Endothelial cell of umbilical vein (primary cell): ENCODE measurements at regions of chr2 and their contacts with region 1.

Region 1: DNA sequence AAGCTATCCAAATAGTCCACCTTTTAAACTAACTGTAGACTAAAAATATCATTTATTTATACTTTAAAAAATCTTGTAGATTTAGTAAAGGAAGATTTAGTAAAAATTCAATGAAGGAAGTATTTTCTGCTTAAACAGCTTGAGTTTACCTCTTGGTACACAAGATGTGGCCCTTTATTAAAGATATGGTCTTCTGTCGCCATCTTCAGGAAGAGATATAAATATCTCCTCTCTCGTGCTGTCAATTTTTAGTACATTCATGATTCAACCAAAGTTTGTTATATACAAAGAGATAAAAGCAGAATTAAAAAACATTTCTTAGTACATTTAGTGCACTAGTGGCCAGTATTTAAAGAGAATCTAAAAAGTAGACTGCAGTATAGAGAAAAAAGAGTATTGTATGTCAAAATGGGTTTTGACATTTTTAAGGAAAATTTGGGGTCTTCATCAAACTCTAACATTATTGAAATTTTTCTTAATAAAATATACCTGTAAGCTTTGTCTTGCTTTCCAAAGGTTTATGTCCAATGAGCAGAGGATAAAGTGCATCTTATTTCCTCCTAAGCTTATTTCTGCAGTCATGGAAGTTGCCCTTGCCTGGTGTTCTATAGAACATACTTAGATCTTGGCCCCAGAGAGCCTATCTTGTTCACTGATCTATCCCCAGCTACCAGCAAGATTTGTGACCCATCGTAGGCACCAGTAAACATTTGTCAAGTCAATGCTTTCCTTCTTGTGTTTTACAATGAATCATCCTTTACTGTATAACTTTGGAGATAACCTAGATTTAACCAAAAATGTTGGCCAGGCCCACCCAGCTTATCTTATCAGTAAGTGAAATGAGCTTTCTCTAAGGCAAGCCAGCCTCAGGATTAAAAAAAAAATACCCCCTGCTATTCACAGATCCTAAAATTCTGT is 18.5 kb upstream of the EML6 start:
- DNase-seq: peak; percentile 71
- H3K4me3 ChIP-seq: no peak overlapping the region
- H3K27ac ChIP-seq: no peak overlapping the region
- H3K4me1 ChIP-seq: peaks cover 8% of the 10 kb centered on the region
- H3K27me3 ChIP-seq: peaks cover 0 to 9% of the 10 kb centered on the region in 2 experiments
- CTCF ChIP-seq: peak; percentile 14 to 20
- POLR2A ChIP-seq: no peak

Region 2: GRCh38 chr2:54106631-54107454 is 598.1 kb before region 1 on chr2:
- CTCF ChIA-PET with region 1: interaction called, 205 read pairs
- POLR2A ChIA-PET with region 1: interaction called, 3 read pairs
- dilution Hi-C with region 1: no loop called
- intact Hi-C with region 1: loop called (anchors 1 kb)
- DNase-seq: peak; percentile 69
- H3K4me3 ChIP-seq: no peak overlapping the region
- H3K27ac ChIP-seq: no peak overlapping the region
- H3K4me1 ChIP-seq: peaks cover 11% of the 10 kb centered on the region
- H3K27me3 ChIP-seq: no peaks in the 10 kb centered on the region
- CTCF ChIP-seq: peak; percentile 53 to 56
- POLR2A ChIP-seq: no peak

Region 3: DNA sequence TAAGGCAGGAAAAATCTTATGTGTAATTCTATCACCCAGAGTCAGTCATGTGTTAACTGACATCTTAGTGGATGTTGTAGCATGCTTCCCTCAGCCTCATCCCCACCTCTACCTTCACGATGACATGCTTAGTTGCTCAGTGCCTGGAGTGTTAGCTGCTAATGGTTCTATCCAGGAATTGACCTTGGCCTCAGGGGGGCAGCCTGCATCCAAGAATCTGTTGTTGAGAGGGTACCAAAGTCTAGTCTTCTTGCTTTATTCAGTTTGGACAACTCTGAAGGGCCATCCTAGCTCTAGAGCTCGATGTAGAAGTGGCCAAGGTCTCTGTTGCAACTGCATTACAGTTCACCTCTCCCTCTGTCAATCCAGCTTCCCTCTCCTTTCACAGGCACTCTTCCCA is 528.4 kb before region 1 on chr2:
- CTCF ChIA-PET with region 1: interaction called, 11 read pairs
- POLR2A ChIA-PET with region 1: no interaction called
- dilution Hi-C with region 1: no loop called
- intact Hi-C with region 1: loop called (anchors 1 kb)
- DNase-seq: peak; percentile 43
- H3K4me3 ChIP-seq: no peak overlapping the region
- H3K27ac ChIP-seq: no peak overlapping the region
- H3K4me1 ChIP-seq: no peaks in the 10 kb centered on the region
- H3K27me3 ChIP-seq: no peaks in the 10 kb centered on the region
- CTCF ChIP-seq: peak; percentile 29 to 30
- POLR2A ChIP-seq: no peak

Region 4: DNA sequence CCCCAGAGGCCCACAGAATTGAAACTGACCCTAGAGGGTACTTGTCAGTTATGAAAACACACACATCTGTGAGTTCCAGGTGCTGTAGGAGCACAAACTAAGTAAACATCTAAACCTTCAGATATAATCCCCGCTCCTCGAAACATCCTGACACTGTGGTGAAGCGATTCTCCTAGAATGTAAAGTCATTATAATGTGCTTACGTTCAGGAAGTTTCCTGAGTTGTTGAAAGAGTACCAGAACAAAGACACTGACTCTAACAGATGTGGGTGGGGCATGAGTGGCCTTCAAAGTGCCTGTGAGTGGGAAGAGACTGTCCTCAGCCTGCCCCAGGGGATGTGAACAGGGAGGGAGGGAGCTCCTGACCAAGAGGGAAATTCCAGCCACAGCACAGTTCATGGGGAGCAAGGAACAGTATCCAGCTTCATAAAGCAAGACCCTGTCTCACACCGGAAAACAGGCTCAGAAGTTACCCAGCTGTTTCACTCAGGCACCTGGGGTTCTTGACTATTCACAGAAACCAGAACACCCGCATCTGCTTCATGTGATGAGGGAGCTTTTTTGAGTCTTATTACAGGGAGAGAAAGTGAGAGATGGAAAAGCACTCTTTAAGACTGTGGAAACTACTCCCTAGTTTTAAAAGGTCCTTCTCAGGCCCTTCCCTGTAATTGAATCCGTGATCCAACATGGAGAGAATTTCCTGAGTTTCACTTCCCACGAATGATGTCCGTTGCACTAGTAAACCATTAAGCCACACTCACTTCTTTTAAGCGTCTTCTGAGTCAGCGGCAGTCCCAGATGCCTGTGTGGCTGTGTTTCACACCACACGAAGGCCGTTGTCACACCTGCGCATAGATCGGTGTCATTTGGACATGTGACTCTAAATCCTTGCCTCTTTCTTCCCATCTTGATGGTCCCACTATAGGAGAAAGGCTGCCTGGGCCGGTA is 70.1 kb before region 1 on chr2:
- CTCF ChIA-PET with region 1: interaction called, 10 read pairs
- POLR2A ChIA-PET with region 1: no interaction called
- dilution Hi-C with region 1: no loop called
- intact Hi-C with region 1: no loop called
- DNase-seq: peak; percentile 92
- H3K4me3 ChIP-seq: no peak overlapping the region
- H3K27ac ChIP-seq: peak overlapping the region; percentile 91
- H3K4me1 ChIP-seq: peaks cover 37% of the 10 kb centered on the region
- H3K27me3 ChIP-seq: no peaks in the 10 kb centered on the region
- CTCF ChIP-seq: no peak
- POLR2A ChIP-seq: no peak

Region 5: DNA sequence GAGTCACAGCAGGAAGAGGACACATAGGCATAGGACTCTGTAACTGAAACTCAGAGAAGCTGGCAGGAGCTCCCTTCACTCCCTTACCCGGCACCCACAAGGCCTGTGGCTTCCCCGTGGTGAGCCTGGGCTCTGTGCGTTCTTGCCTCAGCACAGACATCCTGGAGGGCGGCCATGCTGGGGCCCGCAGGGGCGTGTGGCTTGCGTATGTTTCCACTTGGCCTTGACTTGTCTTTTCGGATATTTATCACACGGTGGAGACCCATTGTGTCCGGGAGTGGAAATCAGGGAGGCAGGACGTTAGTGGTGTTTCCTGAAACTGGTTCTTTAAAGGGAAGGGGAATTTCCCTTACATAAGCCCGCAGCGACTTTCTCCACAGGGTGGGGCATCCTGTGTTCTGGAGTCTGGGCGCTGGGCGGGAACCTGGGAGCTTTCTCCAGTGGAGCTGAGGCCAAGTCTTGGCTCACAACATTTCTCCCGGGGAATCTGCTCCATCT is 31.4 kb before region 1 on chr2:
- CTCF ChIA-PET with region 1: interaction called, 32 read pairs
- POLR2A ChIA-PET with region 1: no interaction called
- dilution Hi-C with region 1: no loop called
- intact Hi-C with region 1: no loop called
- DNase-seq: peak; percentile 97
- H3K4me3 ChIP-seq: no peak overlapping the region
- H3K27ac ChIP-seq: peak overlapping the region; percentile 89
- H3K4me1 ChIP-seq: peaks cover 14% of the 10 kb centered on the region
- H3K27me3 ChIP-seq: peaks cover 0 to 2% of the 10 kb centered on the region in 2 experiments
- CTCF ChIP-seq: no peak
- POLR2A ChIP-seq: no peak

Region 6: GRCh38 chr2:54838585-54839035 is 133.7 kb after region 1 on chr2:
- CTCF ChIA-PET with region 1: interaction called, 53 read pairs
- POLR2A ChIA-PET with region 1: no interaction called
- dilution Hi-C with region 1: no loop called
- intact Hi-C with region 1: no loop called
- DNase-seq: peak; percentile 78
- H3K4me3 ChIP-seq: no peak overlapping the region
- H3K27ac ChIP-seq: no peak overlapping the region
- H3K4me1 ChIP-seq: no peaks in the 10 kb centered on the region
- H3K27me3 ChIP-seq: no peaks in the 10 kb centered on the region
- CTCF ChIP-seq: peak; percentile 80 to 87
- POLR2A ChIP-seq: no peak